SK-N-SH (cell line): ENCODE measurements at regions of chr15 and their contacts with region 1.

Region 1: DNA sequence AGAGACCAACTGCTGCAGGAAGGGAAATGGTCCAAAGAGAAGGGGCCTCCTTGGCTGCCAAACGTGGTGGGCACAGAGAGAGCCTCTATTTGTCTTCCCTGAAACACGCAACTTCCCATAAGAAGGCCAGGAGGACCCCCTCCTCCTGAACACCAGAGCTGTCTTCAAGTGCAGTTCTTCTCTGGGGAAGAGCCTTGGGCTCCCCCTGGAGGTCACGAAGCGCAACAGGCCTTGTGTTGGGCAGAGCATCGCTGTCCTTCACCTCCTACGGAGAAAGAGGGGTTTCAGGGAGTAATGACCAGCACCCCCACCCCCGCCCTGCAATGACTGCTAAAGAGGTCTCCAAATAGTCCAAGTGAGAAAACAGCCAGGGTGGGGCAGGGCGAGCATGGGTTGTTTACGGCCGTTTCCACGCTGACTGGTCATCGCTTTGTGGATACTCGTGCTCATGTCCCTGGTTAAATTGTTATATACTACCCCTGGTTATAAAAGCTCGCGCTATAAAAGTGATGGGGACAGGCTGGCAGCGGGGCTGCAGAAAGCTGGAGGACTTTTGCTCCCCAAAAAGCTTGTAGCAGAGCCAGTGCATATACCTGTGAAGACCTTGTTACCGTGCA is 397.5 kb upstream of the ATP10A start:
- DNase-seq: peak; percentile 59
- H3K4me3 ChIP-seq: no peak overlapping the region; a peak in 1 of 4 replicates
- H3K27ac ChIP-seq: no peak overlapping the region
- H3K4me1 ChIP-seq: no peaks in the 10 kb centered on the region
- H3K27me3 ChIP-seq: no peaks in the 10 kb centered on the region
- CTCF ChIP-seq: peak; percentile 48
- EP300 ChIP-seq: no peak
- RAD21 ChIP-seq: peak; percentile 71

Region 2: DNA sequence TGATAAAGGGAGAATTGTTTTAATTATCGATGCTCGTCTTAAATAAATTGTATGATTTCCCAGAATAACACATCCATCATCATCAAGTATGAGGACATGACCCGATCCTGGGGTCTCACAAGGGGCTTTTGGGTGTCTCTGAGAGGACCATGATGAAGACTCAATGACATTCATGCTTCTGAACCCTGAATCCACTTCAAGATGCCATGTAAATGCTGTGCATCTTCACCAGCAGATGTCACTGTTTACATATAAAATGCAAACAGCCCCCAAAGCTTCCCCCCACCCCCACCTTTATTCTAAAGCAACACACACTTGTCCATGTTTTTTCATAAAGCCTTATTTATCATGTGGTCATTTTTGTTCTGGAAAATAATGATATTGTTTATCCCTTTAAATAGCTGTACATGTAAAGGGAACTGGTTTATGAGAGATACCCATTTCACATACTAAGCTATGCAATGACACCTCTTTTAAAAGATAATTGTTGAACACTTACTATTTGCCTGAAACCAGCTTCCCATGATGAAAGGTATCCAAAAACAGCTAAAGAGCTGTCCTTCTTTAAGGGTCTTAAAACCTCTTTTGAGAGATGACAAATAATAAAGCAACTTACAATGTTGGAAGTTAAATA is 752.1 kb before region 1 on chr15:
- CTCF ChIA-PET with region 1: interaction called, 22 read pairs
- POLR2A ChIA-PET with region 1: no interaction called
- DNase-seq: peak; percentile 59
- H3K4me3 ChIP-seq: peak overlapping the region in 1 of 2 experiments; percentile 13; a peak in 1 of 4 replicates
- H3K27ac ChIP-seq: no peak overlapping the region
- H3K4me1 ChIP-seq: no peaks in the 10 kb centered on the region; a peak in 1 of 4 replicates
- H3K27me3 ChIP-seq: no peaks in the 10 kb centered on the region
- CTCF ChIP-seq: peak; percentile 66
- EP300 ChIP-seq: no peak
- RAD21 ChIP-seq: peak; percentile 88